Activated CD4-positive, alpha-beta T cell treated with anti-CD3 and anti-CD28 coated beads, Interleukin-2, amount 10 ng/mL, durations not matched to agents 24 days and 14 days (primary cell): ENCODE measurements at regions of chr1 and their contacts with region 1.

Region 1: DNA sequence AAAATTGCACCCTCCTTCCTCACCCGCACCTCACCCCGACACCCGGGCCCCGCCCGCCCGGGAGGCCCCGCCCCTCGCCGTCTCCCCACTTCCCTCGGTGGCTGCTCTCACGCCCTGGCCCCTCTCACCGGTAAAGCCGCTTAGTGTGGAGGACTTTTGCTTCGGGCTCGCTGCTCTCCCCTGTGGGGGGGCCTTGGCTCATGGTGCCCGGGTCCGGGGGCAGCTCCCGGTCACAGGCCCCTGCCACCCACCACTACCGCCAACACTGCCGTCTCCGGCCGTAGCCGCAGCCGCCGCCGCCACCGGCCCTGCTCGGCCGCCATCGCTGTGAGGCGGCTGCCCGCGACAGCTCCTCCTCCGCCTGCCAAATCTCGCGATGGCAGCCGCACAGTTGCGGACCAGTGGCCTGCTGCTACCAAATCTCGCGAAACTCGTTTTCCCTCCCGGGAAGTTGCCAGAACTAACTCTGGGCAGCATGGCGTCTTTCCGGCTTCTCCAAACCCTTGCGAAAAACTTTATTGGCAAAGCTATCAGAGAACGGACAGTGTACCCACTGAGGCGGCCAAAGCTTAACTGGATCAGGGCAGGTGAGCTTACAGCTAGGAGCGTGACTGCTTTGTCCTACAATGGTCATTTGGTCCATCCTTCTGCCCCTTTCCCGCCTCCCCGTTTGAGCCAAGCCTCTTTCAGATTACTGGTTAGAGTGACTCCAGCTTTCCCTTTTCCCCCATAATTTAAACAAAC is at the start of gene SMG5:
- DNase-seq: peak; percentile 99
- H3K4me3 Mint-ChIP-seq: peak within 1 kb of the TSS; percentile 93
- H3K27ac Mint-ChIP-seq: peak within 1 kb of the TSS; percentile 96
- H3K4me1 Mint-ChIP-seq: peaks cover 38% of the 10 kb centered on the region
- H3K27me3 Mint-ChIP-seq: no peaks in the 10 kb centered on the region
- total RNA-seq, gene SMG5: 93.8 and 95.8 TPM in 2 replicates

Region 2: DNA sequence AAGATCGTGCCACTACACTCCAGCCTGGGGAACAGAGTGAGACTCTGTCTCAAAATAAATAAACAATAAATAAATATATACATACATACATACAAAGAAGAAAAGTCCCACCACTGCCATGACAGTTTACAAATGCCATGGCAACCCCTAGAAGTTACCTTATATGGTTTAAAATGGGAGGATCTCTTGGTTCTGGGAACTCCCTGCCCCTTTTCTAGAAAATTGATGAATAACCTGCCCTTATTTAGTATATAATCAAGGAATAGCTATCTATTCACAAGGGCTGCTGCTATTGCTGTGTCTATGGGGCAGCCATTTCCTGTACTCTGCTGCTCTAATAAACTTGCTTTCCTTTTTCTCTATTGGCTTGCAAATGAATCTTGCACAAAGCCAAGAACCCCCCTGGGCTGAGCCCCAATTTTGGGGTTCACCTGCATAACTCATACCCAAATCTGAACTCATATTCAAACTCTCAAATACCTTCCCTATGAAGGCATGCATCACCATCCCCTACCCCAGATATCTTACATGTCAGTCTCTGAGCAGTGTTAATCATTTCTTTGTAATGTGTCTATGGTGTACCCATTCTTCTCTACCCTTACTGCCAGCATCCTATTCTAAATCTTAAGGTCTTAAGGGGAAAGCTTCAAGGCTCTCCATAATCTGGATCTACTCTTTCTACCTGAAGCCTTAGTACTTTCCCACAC is 434.7 kb before region 1 on chr1:
- intact Hi-C with region 1: no loop called
- DNase-seq: peak; percentile 67
- H3K4me3 Mint-ChIP-seq: peak overlapping the region; percentile 67
- H3K27ac Mint-ChIP-seq: peak overlapping the region; percentile 79
- H3K4me1 Mint-ChIP-seq: peaks cover 41% of the 10 kb centered on the region
- H3K27me3 Mint-ChIP-seq: no peaks in the 10 kb centered on the region

Region 3: DNA sequence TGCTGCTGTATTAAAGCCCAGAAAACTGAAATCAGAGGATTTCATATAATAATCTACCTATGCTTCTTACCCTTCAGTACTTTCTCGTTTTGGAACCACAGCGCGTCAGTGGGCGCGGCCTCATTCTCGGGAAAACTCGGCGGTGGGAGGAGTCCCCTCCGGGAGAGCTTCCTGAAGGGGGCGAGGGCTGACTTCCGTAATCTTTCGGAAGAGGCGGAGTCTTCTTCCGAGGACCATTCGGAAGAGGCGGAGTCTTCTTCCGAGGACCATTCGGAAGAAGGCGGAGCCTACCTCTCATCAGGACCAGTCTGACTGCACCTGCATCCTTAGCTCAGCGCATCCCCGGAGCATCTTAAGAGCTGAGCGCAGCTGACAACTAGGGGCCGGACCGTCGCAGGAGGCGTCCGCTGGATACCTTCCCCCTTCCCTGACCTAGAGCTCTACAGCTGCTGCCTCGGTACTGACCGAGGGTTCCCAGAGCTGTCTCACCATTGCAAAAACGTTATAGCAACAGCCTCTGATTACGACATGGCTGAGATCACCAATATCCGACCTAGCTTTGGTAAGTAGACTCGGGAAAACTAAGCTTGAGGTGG is 423.3 kb before region 1 on chr1 and contains the start of gene SYT11:
- intact Hi-C with region 1: loop called (anchors 2 kb)
- DNase-seq: peak; percentile 98
- H3K4me3 Mint-ChIP-seq: peak within 1 kb of the TSS; percentile 90
- H3K27ac Mint-ChIP-seq: peak within 1 kb of the TSS; percentile 95
- H3K4me1 Mint-ChIP-seq: peaks cover 36% of the 10 kb centered on the region
- H3K27me3 Mint-ChIP-seq: no peaks in the 10 kb centered on the region
- total RNA-seq, gene SYT11: 17.8 and 18.5 TPM in 2 replicates

Region 4: DNA sequence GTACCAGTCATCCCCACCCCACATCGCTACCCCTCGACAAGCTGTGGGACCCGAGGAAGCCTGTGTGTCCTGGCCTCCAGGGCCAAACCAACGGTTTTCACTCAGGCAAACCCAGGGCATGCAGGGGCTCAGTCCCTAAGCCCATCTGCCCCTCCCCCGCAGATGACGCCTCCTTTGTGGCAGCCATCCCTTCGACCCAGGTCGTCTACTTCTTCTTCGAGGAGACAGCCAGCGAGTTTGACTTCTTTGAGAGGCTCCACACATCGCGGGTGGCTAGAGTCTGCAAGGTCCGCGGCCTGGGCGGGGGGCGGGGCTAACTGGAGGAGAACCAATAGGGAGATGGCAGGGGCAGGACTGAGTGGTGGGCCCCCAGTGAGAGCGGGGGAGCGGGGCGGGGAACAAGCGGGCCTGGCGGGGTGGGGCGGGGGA is 121.9 kb before region 1 on chr1:
- intact Hi-C with region 1: no loop called
- DNase-seq: peak; percentile 86
- H3K4me3 Mint-ChIP-seq: peak overlapping the region; percentile 73
- H3K27ac Mint-ChIP-seq: peak overlapping the region; percentile 79
- H3K4me1 Mint-ChIP-seq: peaks cover 50% of the 10 kb centered on the region
- H3K27me3 Mint-ChIP-seq: no peaks in the 10 kb centered on the region

Region 5: GRCh38 chr1:156193488-156194299 is 89.0 kb before region 1 on chr1 and contains the start of gene SLC25A44:
- intact Hi-C with region 1: loop called (anchors 2 kb)
- DNase-seq: peak; percentile 99
- H3K4me3 Mint-ChIP-seq: peak within 1 kb of the TSS; percentile 100
- H3K27ac Mint-ChIP-seq: peak within 1 kb of the TSS; percentile 97
- H3K4me1 Mint-ChIP-seq: peaks cover 52% of the 10 kb centered on the region
- H3K27me3 Mint-ChIP-seq: no peaks in the 10 kb centered on the region
- total RNA-seq, gene SLC25A44: 61.0 and 67.9 TPM in 2 replicates

Region 6: DNA sequence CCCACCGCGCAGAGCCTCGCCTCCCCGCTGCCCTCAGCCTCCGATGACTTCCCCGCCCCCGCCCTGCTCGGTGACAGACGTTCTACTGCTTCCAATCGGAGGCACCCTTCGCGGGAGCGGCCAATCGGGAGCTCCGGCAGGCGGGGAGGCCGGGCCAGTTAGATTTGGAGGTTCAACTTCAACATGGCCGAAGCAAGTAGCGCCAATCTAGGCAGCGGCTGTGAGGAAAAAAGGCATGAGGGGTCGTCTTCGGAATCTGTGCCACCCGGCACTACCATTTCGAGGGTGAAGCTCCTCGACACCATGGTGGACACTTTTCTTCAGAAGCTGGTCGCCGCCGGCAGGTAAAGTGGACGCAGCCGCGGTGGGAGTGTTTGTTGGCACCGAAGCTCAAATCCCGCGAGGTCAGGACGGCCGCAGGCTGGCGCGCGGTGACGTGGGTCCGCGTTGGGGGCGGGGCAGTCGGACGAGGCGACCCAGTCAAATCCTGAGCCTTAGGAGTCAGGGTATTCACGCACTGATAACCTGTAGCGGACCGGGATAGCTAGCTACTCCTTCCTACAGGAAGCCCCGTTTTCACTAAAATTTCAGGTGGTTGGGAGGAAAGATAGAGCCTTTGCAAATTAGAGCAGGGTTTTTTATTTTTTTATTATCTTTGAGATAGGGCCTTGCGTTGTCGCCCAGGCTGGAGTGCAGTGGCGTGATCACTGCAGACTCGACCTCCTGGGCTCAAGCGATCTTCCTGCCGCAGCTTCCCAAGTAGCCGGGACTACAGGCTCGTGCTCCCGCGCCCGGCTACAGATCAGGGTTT is 69.6 kb before region 1 on chr1 and contains the start of gene PMF1:
- intact Hi-C with region 1: loop called (anchors 2 kb)
- DNase-seq: peak; percentile 98
- H3K4me3 Mint-ChIP-seq: peak within 1 kb of the TSS; percentile 98
- H3K27ac Mint-ChIP-seq: peak within 1 kb of the TSS; percentile 99
- H3K4me1 Mint-ChIP-seq: peaks cover 38% of the 10 kb centered on the region
- H3K27me3 Mint-ChIP-seq: no peaks in the 10 kb centered on the region
- total RNA-seq, gene PMF1: 107 and 113 TPM in 2 replicates

Region 7: DNA sequence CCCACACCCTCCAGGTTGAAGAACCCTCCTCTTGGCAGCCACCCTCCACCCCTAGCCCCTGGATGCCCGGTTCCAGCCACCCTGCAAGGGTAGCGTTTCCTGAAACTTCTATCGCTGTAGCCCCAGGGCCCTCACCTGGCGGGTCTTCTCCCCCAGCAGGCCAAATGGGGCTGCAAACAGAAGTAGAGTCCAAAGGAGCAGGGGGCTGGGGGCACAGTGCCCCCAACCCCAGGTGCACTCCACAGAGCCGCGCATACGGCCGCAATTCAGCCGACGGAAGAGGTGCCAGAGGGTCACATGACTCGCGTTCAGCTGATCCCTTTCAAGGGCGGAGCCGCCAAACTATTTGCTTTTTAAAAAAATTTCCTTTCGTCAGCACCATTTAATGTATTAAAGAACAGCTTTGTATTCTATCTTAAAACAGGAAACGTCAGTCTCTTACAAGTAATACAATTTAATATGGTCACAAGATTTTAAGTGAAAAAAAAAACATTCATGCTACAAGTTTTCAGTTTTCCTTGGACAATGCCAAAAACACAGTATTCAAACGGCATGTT is 12.8 kb after region 1 on chr1 and contains the start of gene GLMP:
- intact Hi-C with region 1: loop called (anchors 1 kb)
- DNase-seq: peak; percentile 88
- H3K4me3 Mint-ChIP-seq: peak within 1 kb of the TSS; percentile 93
- H3K27ac Mint-ChIP-seq: peak within 1 kb of the TSS; percentile 74
- H3K4me1 Mint-ChIP-seq: peaks cover 18% of the 10 kb centered on the region
- H3K27me3 Mint-ChIP-seq: no peaks in the 10 kb centered on the region
- total RNA-seq, gene GLMP: 15.7 and 16.9 TPM in 2 replicates

Region 8: DNA sequence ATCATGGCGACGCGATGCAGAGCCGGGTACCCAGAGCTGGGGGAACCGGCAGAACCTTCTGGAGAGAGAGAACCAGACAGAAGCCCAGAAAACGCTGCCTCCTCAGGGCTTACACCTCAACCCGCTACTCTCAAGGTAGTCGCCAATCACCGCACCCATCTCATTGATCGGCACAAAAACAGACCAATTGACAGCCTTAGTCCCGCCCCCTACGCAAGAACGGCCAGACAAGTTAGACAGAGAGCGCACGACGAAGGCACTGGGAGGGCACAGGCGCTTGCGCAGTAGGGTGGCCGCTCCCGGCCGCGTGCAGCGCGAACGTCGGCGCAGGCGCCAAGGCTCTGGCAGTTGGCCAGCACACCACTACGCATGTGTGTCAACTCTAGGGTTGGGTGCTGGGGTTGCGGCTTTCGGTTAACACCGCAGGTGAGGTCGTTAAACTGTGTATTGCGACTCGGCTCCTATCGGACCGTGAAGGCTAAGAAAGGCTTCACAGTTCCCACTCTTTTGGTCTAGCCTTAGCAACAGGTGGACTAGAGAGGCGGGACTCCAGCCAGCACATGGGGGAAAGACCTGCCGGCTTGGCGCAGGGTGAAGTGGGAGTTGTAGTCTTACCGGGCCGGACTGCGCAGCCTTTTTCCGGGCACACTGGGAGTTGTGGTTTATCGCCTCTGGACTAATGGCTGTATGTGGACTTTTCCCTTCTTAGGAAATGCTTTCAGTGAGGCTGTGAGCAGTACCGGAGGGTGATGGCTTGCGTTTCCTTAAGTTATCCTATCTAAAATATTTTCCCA is 55.7 kb after region 1 on chr1 and contains the starts of genes CCT3 and TSACC:
- intact Hi-C with region 1: loop called (anchors 1 kb)
- DNase-seq: peak; percentile 100
- H3K4me3 Mint-ChIP-seq: peak within 1 kb of the TSS; percentile 99
- H3K27ac Mint-ChIP-seq: peak within 1 kb of the TSS; percentile 97
- H3K4me1 Mint-ChIP-seq: peaks cover 26% of the 10 kb centered on the region
- H3K27me3 Mint-ChIP-seq: peaks cover 9% of the 10 kb centered on the region
- total RNA-seq, gene CCT3: 623 TPM in 2 replicates
- total RNA-seq, gene TSACC: 0.47 and 0.82 TPM in 2 replicates